CD8-positive, alpha-beta T cell (primary cell): ENCODE measurements at regions of chr9 and their contacts with region 1.

Region 1: DNA sequence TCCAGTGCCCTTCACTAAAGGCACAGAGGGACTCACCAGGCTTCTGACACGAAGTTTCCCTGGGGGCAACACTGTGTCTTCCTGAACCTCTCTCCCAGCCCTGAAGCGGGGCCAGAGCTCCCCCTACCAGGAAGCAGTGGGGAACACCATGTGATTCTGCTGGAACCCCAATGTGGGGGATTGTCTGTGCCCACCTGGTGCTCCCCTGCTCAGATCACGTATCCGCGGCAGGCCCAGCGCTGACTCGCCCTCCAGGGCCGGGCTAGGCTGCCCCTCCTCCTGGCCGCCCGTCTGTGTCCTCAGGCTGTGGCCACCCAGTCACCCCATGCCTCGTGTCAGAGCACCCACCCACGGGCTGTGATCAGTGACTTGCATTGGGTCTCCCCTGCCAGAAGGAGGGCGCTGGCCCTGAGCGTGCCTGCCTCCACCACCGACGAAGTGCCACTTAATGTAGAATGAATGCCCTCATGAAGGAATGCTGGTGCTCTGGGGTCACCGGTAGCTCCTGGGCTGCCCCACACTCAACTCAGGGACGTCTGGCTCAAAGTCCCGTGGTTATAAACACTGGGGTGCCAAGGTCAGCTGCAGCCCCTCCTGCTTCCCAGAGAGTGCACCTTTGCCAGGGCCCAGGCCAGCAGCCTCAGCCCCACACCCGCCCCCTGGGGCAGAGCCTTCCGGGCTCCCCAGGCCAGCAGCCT is 22.1 kb downstream of the SARDH start:
- DNase-seq: peak in 8 of 9 experiments; percentile 25 to 68 (median 44)
- ATAC-seq: peak; percentile 82
- H3K4me3 ChIP-seq: no peak overlapping the region
- H3K4me3 Mint-ChIP-seq: no peak overlapping the region
- H3K27ac ChIP-seq: no peak overlapping the region
- H3K27ac Mint-ChIP-seq: no peak overlapping the region
- H3K4me1 ChIP-seq: peaks cover 8% of the 10 kb centered on the region
- H3K4me1 Mint-ChIP-seq: peaks cover 10% of the 10 kb centered on the region
- H3K27me3 ChIP-seq: no peaks in the 10 kb centered on the region
- H3K27me3 Mint-ChIP-seq: peaks cover 2% of the 10 kb centered on the region
- CTCF ChIP-seq: peak; percentile 53

Region 2: GRCh38 chr9:133275105-133276000 is 440.7 kb before region 1 on chr9 and contains the start of gene ABO:
- CTCF ChIA-PET with region 1: no interaction called
- POLR2A ChIA-PET with region 1: no interaction called
- intact Hi-C with region 1: no loop called
- DNase-seq: no peak
- ATAC-seq: no peak
- H3K4me3 ChIP-seq: no peak within 1 kb of the TSS
- H3K4me3 Mint-ChIP-seq: no peak within 1 kb of the TSS
- H3K27ac ChIP-seq: no peak within 1 kb of the TSS
- H3K27ac Mint-ChIP-seq: no peak within 1 kb of the TSS
- H3K4me1 ChIP-seq: peaks cover 6% of the 10 kb centered on the region
- H3K4me1 Mint-ChIP-seq: no peaks in the 10 kb centered on the region
- H3K27me3 ChIP-seq: peaks cover 0 to 2% of the 10 kb centered on the region in 2 experiments
- H3K27me3 Mint-ChIP-seq: peaks cover 57% of the 10 kb centered on the region
- CTCF ChIP-seq: no peak
- total RNA-seq, gene ABO: not detected

Region 3: DNA sequence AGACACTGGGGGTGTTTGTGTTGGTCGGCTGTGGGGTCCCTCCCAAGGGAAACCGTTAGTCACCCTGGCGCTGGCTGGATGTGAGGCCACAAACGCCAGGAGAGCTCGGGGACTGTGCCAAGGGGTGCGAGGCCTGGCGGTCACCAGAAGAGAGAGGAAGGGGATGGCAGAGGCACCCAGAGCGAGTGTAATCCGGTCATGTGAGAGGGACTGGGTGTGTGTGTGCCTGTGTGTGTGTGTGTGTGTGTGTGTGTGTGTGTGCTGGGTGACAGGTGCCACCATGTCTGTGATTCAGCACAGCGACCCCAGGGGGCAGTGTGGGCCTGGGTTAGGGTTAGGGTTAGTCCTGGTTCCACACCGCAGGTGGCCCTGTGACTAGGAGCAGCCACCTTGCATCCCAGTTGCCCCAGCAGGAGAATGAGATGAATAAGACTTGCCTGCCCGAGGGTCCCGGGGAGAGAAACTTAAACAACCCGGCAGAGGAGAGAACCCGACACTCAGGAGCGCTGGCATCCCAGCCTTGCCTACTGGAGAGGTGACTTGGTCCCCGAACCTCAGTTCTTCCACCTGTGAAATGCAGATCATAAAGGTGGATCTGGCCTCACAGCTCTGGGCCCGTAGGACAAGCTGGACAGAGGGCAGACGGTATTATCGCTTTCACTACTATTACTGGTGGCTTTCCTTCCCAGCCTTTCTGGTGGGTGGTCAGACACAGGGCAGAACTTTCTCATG is 182.9 kb before region 1 on chr9:
- CTCF ChIA-PET with region 1: interaction called, 4 read pairs
- POLR2A ChIA-PET with region 1: no interaction called
- intact Hi-C with region 1: loop called in 1 of 2 experiments (anchors 1 kb)
- DNase-seq: peak; percentile 25 to 82 (median 67)
- ATAC-seq: peak; percentile 78
- H3K4me3 ChIP-seq: no peak overlapping the region
- H3K4me3 Mint-ChIP-seq: peak overlapping the region; percentile 42
- H3K27ac ChIP-seq: no peak overlapping the region
- H3K27ac Mint-ChIP-seq: peak overlapping the region; percentile 49
- H3K4me1 ChIP-seq: peaks cover 26% of the 10 kb centered on the region
- H3K4me1 Mint-ChIP-seq: peaks cover 13% of the 10 kb centered on the region
- H3K27me3 ChIP-seq: peaks cover 0 to 2% of the 10 kb centered on the region in 2 experiments
- H3K27me3 Mint-ChIP-seq: peaks cover 10% of the 10 kb centered on the region
- CTCF ChIP-seq: peak; percentile 48

Region 4: DNA sequence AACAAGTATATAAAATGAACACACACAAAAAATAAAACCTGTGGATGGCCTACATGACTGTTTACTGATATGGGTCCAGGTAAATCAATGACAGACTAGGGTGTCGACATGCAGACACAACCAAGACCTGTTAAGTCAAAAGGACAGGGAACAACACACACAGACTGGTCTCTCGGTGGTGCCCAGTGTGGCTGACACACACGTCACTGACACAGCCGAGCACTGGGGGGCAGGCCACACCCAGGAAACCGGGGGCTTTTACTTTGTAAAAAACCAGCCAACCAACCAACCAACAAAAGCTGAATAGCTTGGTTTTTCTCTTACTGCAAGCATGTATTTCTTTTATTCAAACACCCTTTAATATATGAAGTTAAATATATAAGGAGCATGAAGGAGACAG is 111.8 kb before region 1 on chr9:
- CTCF ChIA-PET with region 1: interaction called, 28 read pairs
- POLR2A ChIA-PET with region 1: interaction called, 3 read pairs
- intact Hi-C with region 1: loop called (anchors 1 kb)
- DNase-seq: peak in 8 of 9 experiments; percentile 27 to 75 (median 56)
- ATAC-seq: peak; percentile 85
- H3K4me3 ChIP-seq: no peak overlapping the region
- H3K4me3 Mint-ChIP-seq: no peak overlapping the region
- H3K27ac ChIP-seq: no peak overlapping the region
- H3K27ac Mint-ChIP-seq: peak overlapping the region; percentile 3
- H3K4me1 ChIP-seq: peaks cover 11% of the 10 kb centered on the region
- H3K4me1 Mint-ChIP-seq: peaks cover 10% of the 10 kb centered on the region
- H3K27me3 ChIP-seq: peaks cover 0 to 4% of the 10 kb centered on the region in 2 experiments
- H3K27me3 Mint-ChIP-seq: peaks cover 19% of the 10 kb centered on the region
- CTCF ChIP-seq: peak; percentile 52

Region 5: GRCh38 chr9:133658442-133659431 is 57.3 kb before region 1 on chr9:
- CTCF ChIA-PET with region 1: interaction called, 40 read pairs
- POLR2A ChIA-PET with region 1: interaction called, 6 read pairs
- intact Hi-C with region 1: loop called (anchors 1 kb)
- DNase-seq: no peak
- ATAC-seq: no peak
- H3K4me3 ChIP-seq: no peak overlapping the region
- H3K4me3 Mint-ChIP-seq: peak overlapping the region; percentile 54
- H3K27ac ChIP-seq: no peak overlapping the region
- H3K27ac Mint-ChIP-seq: peak overlapping the region; percentile 84
- H3K4me1 ChIP-seq: peaks cover 23% of the 10 kb centered on the region
- H3K4me1 Mint-ChIP-seq: peaks cover 41% of the 10 kb centered on the region
- H3K27me3 ChIP-seq: peaks cover 5 to 9% of the 10 kb centered on the region in 2 experiments
- H3K27me3 Mint-ChIP-seq: peaks cover 40% of the 10 kb centered on the region
- CTCF ChIP-seq: no peak

Region 6: DNA sequence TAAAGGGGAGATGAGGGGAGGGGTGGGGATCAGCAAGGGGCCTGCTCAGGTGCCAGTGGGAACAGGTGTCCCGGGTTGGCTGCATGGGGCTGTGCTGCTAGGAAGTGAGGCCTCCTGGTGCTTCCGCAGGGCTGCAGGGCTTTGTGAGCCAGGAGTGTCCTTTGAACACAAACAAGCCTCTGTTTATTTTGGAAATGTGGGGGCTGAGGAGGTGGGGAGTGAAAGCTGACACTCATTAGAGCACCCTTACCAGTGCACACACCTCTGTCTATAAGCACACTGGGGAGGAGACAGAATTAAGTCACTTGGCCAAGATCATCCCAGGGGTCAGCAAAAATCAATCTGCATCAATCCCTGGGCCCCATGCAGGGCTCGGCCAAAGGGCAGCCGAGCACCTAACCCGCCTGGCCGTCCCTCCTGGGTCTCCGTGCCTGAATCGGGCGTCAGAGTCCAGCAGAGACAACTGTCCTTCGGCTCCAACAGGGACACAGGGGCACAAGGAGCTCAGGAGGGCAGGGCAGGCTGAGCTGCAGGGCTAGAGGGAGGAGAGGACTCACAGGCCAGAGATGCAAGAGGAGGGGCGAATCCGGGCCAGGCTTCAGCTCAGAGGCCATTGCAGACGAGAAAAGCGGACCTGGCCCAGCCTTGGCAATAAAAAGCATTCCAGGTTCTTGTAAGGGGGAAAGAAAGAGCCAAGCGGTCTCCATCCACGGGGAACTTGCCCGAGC is 176.3 kb after region 1 on chr9:
- CTCF ChIA-PET with region 1: no interaction called
- POLR2A ChIA-PET with region 1: no interaction called
- intact Hi-C with region 1: no loop called
- DNase-seq: no peak
- ATAC-seq: no peak
- H3K4me3 ChIP-seq: no peak overlapping the region
- H3K4me3 Mint-ChIP-seq: no peak overlapping the region
- H3K27ac ChIP-seq: no peak overlapping the region
- H3K27ac Mint-ChIP-seq: no peak overlapping the region
- H3K4me1 ChIP-seq: no peaks in the 10 kb centered on the region
- H3K4me1 Mint-ChIP-seq: no peaks in the 10 kb centered on the region
- H3K27me3 ChIP-seq: no peaks in the 10 kb centered on the region
- H3K27me3 Mint-ChIP-seq: no peaks in the 10 kb centered on the region
- CTCF ChIP-seq: no peak